GM10248 (cell line): ENCODE measurements at regions of chr17 and their contacts with region 1.

Region 1: GRCh38 chr17:43878260-43879175 is 28.8 kb downstream of the MPP2 start:
- DNase-seq: peak; percentile 87
- CTCF ChIP-seq: peak; percentile 99

Region 2: GRCh38 chr17:43855061-43855460 is 23.5 kb before region 1 on chr17:
- CTCF ChIA-PET with region 1: interaction called, 14 read pairs
- POLR2A ChIA-PET with region 1: no interaction called
- DNase-seq: peak; percentile 5
- CTCF ChIP-seq: no peak

Region 3: DNA sequence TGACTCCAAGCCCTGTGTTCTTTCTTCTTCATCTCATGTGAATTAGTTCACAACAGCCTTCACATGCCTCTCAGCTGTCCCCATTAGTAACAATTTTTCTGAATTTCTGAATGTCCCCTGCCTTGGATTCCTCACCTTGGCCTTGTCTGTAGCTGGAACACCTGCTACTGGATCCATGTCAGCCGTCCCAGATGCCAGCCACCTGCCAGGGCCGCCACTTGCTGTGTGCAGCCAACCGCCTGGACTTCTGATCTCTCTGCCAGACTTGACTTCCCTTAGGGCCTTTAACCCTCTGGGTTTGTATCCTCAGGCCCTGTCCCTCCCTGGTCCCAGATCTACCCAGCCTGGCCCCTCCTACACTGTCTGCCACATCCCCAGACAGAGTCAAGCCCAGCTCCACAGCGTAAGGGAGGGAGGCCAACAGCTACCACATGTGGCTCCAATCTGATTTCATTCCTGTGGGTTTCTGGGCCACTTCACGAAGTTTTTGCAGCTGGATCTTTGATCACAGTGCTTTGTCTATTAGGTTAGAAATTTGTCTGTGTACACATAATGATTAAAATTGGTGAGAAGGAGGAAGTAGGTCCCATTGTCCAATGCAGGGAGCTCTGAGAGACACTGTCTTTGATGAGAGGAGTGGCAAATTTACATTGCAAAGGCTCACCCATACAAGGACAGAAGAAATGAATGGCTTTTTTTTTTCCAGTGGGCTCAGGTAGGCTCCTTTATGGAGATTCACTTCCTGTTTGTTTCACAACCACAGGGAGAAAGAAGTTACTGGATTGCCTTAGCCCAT is 13.5 kb after region 1 on chr17:
- CTCF ChIA-PET with region 1: interaction called, 38 read pairs
- POLR2A ChIA-PET with region 1: no interaction called
- DNase-seq: no peak
- CTCF ChIP-seq: no peak

Region 4: GRCh38 chr17:43907425-43907981 is 29.0 kb after region 1 on chr17 and contains the start of gene MPP2:
- CTCF ChIA-PET with region 1: interaction called, 41 read pairs
- POLR2A ChIA-PET with region 1: no interaction called
- DNase-seq: peak; percentile 48
- CTCF ChIP-seq: no peak

Region 5: DNA sequence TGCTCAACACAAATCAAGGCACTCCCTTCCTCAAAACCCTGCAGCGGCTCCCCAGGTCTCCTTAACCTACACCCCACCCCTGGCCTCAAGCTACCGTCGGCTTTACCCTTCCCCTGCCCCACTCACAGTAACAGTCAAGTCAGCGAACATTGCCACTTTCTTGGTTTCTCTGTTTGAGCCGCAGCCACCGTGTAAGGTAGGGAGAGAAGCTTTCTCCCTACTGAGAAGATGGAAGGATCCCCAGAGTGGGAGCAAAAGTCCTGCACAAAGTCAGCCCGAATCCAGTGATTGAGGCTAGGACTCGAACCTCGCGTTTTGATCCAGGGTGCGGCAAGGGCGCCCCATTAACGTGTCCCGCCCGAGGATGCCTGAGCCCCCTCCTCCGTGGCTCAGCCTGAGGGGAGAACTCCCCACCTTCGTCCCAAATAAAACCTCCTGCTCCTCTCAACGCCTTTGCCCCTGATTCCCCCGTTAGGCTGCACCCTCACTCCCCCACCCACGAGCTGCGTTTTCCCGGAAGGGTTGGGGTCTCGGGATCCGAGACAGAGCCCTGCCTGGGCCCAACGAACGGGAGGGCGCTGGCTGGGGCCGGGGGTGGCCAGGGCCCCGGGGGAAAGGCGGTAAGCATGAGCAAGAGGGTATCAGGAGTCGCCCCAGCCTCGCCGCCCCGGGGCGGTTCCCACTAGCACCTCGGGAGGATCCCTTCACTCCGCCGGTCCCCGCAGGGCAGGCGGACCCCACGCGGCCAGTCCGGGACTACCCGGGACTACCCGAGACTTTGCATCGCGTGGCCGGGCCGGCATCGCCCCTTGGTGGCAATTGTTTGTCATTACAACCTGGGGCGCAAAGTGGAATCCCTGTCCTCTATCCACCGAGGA is 116.0 kb after region 1 on chr17:
- CTCF ChIA-PET with region 1: interaction called, 17 read pairs
- POLR2A ChIA-PET with region 1: no interaction called
- DNase-seq: peak; percentile 76
- CTCF ChIP-seq: peak; percentile 82